Activated naive CD8-positive, alpha-beta T cell treated with anti-CD3 and anti-CD28 coated beads, Interleukin-2, amount 10 ng/mL, durations not matched to agents 7 days and 5 days (primary cell): ENCODE measurements at regions of chr14 and their contacts with region 1.

Region 1: DNA sequence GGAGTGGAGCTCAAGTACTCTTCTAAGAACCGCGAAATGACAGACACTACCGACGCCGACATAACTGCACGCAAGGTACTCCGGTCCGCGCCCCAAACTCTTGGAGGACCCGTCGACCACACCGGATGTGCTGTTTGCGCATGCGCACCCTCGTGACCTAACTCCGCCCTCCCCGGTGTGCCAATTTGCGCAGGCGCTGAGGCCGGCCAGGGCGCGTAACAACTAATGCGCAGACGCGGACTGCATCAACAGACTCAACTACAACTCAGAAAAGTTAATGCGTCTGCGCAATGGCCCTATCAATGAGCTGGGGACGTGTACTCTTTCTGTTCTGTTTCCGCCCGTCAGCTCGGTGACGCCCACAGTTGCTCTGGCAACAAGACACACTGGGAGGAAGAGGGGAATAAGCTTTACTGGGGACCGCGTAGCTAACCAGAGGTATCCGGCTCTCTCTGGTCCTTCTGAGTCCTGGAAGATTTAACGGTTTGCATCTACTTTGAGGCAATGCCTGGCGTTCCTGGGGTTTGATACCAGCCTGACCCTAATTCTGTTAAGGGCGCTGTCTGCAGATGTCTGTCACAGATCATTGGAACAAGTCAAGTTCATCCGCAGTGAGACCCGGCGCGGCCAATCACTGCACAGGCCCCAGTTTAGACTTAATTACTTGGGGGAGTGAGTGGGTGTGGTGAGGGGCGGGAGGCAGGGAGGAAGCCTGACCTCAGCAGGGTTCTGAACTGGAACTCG is at the start of gene DAD1:
- DNase-seq: peak; percentile 100
- ATAC-seq: peak; percentile 93
- H3K4me3 Mint-ChIP-seq: peak within 1 kb of the TSS; percentile 90
- H3K27ac Mint-ChIP-seq: peak within 1 kb of the TSS; percentile 100
- H3K4me1 Mint-ChIP-seq: peaks cover 44% of the 10 kb centered on the region
- H3K27me3 Mint-ChIP-seq: no peaks in the 10 kb centered on the region
- total RNA-seq, gene DAD1: 124 to 148 TPM

Region 2: GRCh38 chr14:22699801-22700564 is 110.7 kb after region 1 on chr14:
- POLR2A ChIA-PET with region 1: no interaction called
- DNase-seq: no peak
- ATAC-seq: no peak
- H3K4me3 Mint-ChIP-seq: no peak overlapping the region
- H3K27ac Mint-ChIP-seq: no peak overlapping the region
- H3K4me1 Mint-ChIP-seq: no peaks in the 10 kb centered on the region
- H3K27me3 Mint-ChIP-seq: peaks cover 34% of the 10 kb centered on the region

Region 3: GRCh38 chr14:22766456-22767322 is 177.4 kb after region 1 on chr14 and contains the start of gene OXA1L:
- POLR2A ChIA-PET with region 1: interaction called, 19 read pairs
- DNase-seq: peak; percentile 89
- ATAC-seq: peak; percentile 90
- H3K4me3 Mint-ChIP-seq: peak within 1 kb of the TSS; percentile 83
- H3K27ac Mint-ChIP-seq: peak within 1 kb of the TSS; percentile 98
- H3K4me1 Mint-ChIP-seq: peaks cover 33% of the 10 kb centered on the region
- H3K27me3 Mint-ChIP-seq: no peaks in the 10 kb centered on the region
- total RNA-seq, gene OXA1L: 127 to 130 TPM